Activated naive CD4-positive, alpha-beta T cell treated with anti-CD3 and anti-CD28 coated beads for 36 hours (primary cell): ENCODE measurements at regions of chr6 and their contacts with region 1.

Region 1: DNA sequence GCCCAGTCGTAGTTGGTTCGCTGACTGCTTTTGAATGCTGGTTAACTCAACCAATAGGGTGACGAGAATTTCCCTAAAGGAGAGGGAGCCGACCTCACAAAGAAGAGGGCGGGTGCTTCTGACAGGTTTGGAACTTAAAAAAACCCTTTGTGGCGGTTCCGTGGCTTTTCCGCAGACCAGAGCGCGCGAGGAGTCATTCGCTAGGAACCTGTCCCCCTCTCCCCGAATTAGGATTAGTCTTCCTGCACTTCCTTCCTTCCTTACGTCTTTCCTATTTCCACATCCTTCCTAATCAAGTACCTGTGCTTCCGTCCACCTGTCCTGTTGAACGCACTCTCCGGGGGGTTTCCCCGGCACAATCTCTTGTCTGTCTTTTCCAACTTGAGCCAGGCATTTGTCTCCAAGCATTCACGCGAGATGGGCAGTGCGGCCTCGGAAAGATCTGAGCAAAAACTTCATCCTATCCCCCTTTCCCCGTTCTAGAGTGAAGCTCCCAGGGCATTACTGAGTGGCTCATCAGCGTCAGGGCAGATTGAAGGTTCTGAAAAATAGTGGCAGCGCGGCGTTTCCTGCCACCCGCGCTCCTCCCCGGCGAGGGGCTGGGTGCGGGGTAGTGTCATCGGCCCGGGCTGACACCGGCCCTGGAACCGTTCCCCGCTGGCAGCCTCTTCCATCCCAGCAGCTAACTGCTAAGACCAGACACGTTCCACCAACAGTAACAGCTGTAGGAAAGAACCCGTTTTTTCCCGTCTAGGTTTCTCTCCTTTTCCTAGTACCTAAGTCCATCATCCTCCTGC is 1.5 kb upstream of the STXBP5 start:
- DNase-seq: peak; percentile 88
- H3K4me3 Mint-ChIP-seq: peak overlapping the region; percentile 83
- H3K27ac Mint-ChIP-seq: peak overlapping the region; percentile 99
- H3K4me1 Mint-ChIP-seq: peaks cover 20% of the 10 kb centered on the region
- H3K27me3 Mint-ChIP-seq: no peaks in the 10 kb centered on the region

Region 2: GRCh38 chr6:145734486-145735355 is 1468.0 kb before region 1 on chr6:
- CTCF ChIA-PET with region 1: no interaction called
- intact Hi-C with region 1: loop called (anchors 5 kb)
- DNase-seq: peak; percentile 75
- H3K4me3 Mint-ChIP-seq: peak overlapping the region; percentile 94
- H3K27ac Mint-ChIP-seq: peak overlapping the region; percentile 97
- H3K4me1 Mint-ChIP-seq: peaks cover 21% of the 10 kb centered on the region
- H3K27me3 Mint-ChIP-seq: no peaks in the 10 kb centered on the region

Region 3: GRCh38 chr6:145963216-145964068 is 1239.3 kb before region 1 on chr6:
- CTCF ChIA-PET with region 1: no interaction called
- intact Hi-C with region 1: loop called (anchors 1 kb)
- DNase-seq: peak; percentile 58
- H3K4me3 Mint-ChIP-seq: peak overlapping the region; percentile 94
- H3K27ac Mint-ChIP-seq: peak overlapping the region; percentile 70
- H3K4me1 Mint-ChIP-seq: peaks cover 48% of the 10 kb centered on the region
- H3K27me3 Mint-ChIP-seq: no peaks in the 10 kb centered on the region

Region 4: GRCh38 chr6:147222160-147222838 is 19.6 kb after region 1 on chr6:
- CTCF ChIA-PET with region 1: no interaction called
- intact Hi-C with region 1: no loop called
- DNase-seq: no peak
- H3K4me3 Mint-ChIP-seq: no peak overlapping the region
- H3K27ac Mint-ChIP-seq: no peak overlapping the region
- H3K4me1 Mint-ChIP-seq: peaks cover 43% of the 10 kb centered on the region
- H3K27me3 Mint-ChIP-seq: no peaks in the 10 kb centered on the region

Region 5: GRCh38 chr6:147268254-147268653 is 65.5 kb after region 1 on chr6:
- CTCF ChIA-PET with region 1: no interaction called
- intact Hi-C with region 1: loop called (anchors 1 kb)
- DNase-seq: no peak
- H3K4me3 Mint-ChIP-seq: no peak overlapping the region
- H3K27ac Mint-ChIP-seq: peak overlapping the region; percentile 83
- H3K4me1 Mint-ChIP-seq: peaks cover 17% of the 10 kb centered on the region
- H3K27me3 Mint-ChIP-seq: no peaks in the 10 kb centered on the region

Region 6: GRCh38 chr6:148134592-148134991 is 931.9 kb after region 1 on chr6:
- CTCF ChIA-PET with region 1: no interaction called
- intact Hi-C with region 1: no loop called
- DNase-seq: no peak
- H3K4me3 Mint-ChIP-seq: no peak overlapping the region
- H3K27ac Mint-ChIP-seq: no peak overlapping the region
- H3K4me1 Mint-ChIP-seq: no peaks in the 10 kb centered on the region
- H3K27me3 Mint-ChIP-seq: peaks cover 7% of the 10 kb centered on the region

Region 7: DNA sequence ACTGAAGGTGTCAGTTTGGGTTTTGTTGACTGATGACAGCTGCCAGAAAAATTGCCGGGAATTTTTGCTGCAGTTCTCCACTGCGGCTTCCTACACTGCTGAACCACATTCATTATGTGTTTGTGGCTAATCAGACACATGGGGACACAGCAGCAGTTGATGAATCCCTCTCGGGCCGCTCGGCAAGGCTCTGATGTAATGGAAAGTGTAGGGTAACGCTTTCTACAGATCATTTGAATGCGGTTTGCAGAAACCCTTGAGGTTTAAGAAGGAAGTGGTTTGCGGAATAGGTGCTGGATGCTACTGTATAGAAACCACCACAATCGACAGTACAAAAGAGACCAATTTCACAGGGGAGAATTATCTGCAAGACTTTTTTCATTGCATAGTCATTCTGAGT is 1001.3 kb after region 1 on chr6:
- CTCF ChIA-PET with region 1: no interaction called
- intact Hi-C with region 1: loop called (anchors 5 kb)
- DNase-seq: peak; percentile 87
- H3K4me3 Mint-ChIP-seq: peak overlapping the region; percentile 48
- H3K27ac Mint-ChIP-seq: peak overlapping the region; percentile 85
- H3K4me1 Mint-ChIP-seq: peaks cover 50% of the 10 kb centered on the region
- H3K27me3 Mint-ChIP-seq: peaks cover 72% of the 10 kb centered on the region